Activated T-helper 1 cell treated with anti-CD3 and anti-CD28 coated beads, Interleukin-12 subunit alpha, Interleukin-12 subunit beta, Interleukin-2, Interleukin-4 antibody, amounts not matched to agents 30 ng/mL and 10 ng/mL and 1 ng/mL, durations not matched to agents 14 hours and 24 hours and 36 hours (primary cell): ENCODE measurements at regions of chr2 and their contacts with region 1.

Region 1: DNA sequence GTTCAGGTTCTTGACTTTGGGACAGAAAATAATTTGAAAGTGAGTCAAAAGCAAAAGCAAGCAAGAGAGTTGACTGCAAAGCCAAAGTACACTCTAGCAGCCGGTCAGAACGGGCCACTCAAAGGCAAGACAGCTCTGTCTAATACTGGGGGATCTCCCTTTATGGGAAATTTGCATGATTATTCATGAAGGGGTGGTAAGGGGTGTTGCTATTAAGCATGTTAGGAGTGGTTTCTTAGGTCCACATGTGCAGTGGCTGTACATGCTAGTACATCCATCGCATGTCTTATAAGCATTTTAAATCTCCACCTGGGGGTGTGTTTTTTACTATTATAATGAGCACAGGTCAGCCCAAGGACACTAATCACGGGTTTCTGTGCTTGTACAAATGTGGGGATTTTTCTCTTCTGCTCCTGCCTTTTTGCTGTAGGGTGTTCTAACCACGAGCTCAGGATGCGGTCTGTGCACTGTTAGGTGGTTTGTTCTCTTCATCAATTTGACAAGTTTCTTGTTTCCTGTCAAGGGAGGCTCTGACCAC is 60.2 kb upstream of the SPP2 start:
- DNase-seq: peak; percentile 69
- H3K4me3 Mint-ChIP-seq: peak overlapping the region; percentile 38
- H3K27ac Mint-ChIP-seq: no peak overlapping the region
- H3K4me1 Mint-ChIP-seq: peaks cover 49% of the 10 kb centered on the region
- H3K27me3 Mint-ChIP-seq: peaks cover 27% of the 10 kb centered on the region

Region 2: DNA sequence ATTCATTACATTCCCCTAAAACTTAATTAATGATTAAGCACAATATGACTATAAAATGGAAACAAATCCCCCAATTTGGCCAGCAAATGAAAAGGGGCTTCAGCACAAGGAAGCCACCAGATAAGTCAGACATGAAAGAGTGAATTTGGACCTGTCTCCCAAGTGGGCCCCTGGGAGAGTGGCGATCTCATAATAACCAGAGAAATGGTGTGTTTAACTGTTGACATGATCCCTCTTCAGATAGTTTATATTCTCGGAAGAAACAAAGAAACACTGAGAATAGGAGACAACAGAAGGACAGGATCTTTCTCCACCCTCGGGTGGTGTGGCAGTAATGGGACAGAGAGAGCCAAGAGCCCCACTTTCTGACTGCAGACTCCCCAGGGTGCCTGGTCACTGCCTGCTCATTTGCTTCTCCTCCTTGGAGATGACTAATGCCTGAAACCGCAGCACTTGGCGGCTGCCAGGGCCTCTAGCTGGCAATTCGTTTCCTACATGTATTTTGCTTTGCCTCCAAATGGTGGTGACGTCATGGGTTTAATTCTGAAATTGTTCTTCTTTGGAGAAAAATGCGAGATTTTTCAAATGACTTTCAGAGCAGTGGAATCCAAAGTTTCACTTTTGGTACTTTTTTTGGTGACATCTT is 13.8 kb after region 1 on chr2:
- intact Hi-C with region 1: loop called (anchors 1 kb)
- DNase-seq: no peak
- H3K4me3 Mint-ChIP-seq: no peak overlapping the region
- H3K27ac Mint-ChIP-seq: no peak overlapping the region
- H3K4me1 Mint-ChIP-seq: peaks cover 13% of the 10 kb centered on the region
- H3K27me3 Mint-ChIP-seq: peaks cover 30% of the 10 kb centered on the region

Region 3: GRCh38 chr2:234032279-234032856 is 42.0 kb after region 1 on chr2:
- intact Hi-C with region 1: loop called (anchors 1 kb)
- DNase-seq: peak; percentile 24
- H3K4me3 Mint-ChIP-seq: no peak overlapping the region
- H3K27ac Mint-ChIP-seq: peak overlapping the region; percentile 20
- H3K4me1 Mint-ChIP-seq: peaks cover 27% of the 10 kb centered on the region
- H3K27me3 Mint-ChIP-seq: peaks cover 14% of the 10 kb centered on the region

Region 4: DNA sequence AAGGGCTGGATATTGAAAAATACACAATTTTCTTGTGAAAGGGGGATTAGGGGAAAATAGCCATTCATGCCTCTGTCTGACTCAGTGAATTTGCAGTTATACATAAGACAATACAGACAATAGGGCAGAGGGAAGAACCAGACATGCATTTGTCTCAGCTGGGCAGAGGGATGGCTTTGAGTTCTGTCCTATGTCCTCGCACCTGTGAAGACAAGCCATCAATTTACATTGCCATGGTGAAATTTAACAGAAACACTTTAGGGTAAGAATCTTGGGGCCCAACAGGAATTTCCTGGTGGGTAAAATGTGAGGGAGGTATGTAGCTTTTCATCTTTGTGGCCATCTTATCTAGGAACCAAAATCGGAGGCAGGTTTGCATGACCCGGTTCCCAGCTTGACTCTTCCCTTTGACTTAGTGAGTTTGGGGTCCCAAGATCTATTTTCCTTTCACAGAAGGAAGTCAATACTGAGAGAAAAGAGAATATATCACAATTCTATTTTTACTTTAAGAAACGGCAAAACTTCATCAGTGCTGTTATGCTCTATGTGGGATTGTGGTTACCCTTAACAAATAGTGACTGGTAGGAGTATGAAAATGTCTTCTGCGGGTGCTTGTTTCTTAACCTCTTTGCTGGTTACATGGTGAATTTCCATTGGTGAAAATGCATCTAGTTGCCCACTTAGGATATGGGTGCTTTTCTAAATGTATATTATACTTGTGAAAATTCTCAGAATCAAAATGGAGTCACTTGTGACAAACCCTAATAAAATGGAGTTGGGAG is 281.9 kb after region 1 on chr2:
- intact Hi-C with region 1: loop called (anchors 1 kb)
- DNase-seq: no peak
- H3K4me3 Mint-ChIP-seq: peak overlapping the region; percentile 40
- H3K27ac Mint-ChIP-seq: peak overlapping the region; percentile 85
- H3K4me1 Mint-ChIP-seq: peaks cover 80% of the 10 kb centered on the region
- H3K27me3 Mint-ChIP-seq: no peaks in the 10 kb centered on the region

Region 5: DNA sequence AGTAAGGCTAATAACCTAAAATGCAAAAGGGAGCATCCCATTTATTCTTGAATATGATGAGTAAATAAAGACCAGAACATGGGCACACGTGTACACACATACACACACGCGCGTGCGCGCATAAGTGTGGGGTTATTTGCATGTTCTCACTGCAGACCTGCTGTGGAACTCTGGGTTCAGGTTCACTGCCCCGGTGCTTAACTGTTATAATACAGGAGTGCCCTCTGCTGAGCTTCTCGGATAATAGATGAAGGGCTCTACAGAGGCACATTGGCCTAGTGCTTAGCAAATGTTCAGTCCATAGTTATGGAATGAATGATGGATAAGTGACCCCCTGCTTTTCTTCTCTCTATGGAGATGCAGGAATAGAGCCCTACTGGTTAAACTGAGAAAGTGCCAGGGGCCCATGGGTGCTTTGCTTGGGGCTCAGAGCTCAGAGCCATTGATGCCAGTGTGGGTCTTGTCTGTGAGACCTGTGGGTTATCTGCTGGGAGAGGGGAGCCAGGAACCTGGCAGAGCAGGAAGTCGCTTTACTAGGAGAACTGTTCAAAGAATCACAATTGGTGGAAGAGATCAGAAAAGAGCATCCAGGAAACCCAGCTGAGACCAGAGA is 510.2 kb after region 1 on chr2:
- intact Hi-C with region 1: loop called (anchors 1 kb)
- DNase-seq: peak; percentile 72
- H3K4me3 Mint-ChIP-seq: peak overlapping the region; percentile 58
- H3K27ac Mint-ChIP-seq: peak overlapping the region; percentile 34
- H3K4me1 Mint-ChIP-seq: peaks cover 32% of the 10 kb centered on the region
- H3K27me3 Mint-ChIP-seq: peaks cover 13% of the 10 kb centered on the region